HepG2 (cell line): ENCODE measurements at regions of chr4 and their contacts with region 1.

Region 1: DNA sequence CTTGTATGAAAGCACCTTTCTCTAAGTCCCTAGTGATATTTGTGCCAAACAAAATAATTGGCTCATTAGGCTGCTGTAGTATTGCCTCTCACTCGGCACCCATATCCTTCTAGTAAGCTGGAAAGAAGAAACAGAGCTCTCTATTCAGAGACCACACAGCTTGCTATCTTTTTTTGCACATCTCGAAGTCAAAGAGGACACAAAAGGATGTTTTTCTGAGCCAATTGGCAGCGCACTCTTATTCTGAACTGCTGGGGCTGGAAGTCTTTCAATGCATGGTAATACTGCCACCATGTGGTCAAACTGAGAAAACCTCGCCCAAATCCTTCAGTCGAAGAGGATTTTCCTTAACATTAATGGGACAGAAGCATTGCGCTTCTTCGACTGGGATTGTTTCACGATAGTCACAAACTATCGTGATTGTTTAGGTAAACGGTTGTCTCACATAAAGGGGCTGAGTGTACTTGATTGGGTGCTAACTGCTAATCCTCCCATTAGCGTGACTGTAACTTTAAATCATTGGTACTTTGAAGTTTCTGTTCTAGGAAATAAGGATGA is 572.0 kb upstream of the LCORL start:
- DNase-seq: peak; percentile 66
- ATAC-seq: peak; percentile 85
- H3K4me3 ChIP-seq: no peak overlapping the region
- H3K27ac ChIP-seq: no peak overlapping the region
- H3K4me1 ChIP-seq: peaks cover 11% of the 10 kb centered on the region; the same call in 1 of the 2 replicates
- H3K27me3 ChIP-seq: peaks cover 0 to 5% of the 10 kb centered on the region in 2 experiments; a peak in 1 of 5 replicates
- CTCF ChIP-seq: peak; percentile 85
- EP300 ChIP-seq: no peak
- POLR2A ChIP-seq: no peak
- RAD21 ChIP-seq: peak; percentile 83

Region 2: DNA sequence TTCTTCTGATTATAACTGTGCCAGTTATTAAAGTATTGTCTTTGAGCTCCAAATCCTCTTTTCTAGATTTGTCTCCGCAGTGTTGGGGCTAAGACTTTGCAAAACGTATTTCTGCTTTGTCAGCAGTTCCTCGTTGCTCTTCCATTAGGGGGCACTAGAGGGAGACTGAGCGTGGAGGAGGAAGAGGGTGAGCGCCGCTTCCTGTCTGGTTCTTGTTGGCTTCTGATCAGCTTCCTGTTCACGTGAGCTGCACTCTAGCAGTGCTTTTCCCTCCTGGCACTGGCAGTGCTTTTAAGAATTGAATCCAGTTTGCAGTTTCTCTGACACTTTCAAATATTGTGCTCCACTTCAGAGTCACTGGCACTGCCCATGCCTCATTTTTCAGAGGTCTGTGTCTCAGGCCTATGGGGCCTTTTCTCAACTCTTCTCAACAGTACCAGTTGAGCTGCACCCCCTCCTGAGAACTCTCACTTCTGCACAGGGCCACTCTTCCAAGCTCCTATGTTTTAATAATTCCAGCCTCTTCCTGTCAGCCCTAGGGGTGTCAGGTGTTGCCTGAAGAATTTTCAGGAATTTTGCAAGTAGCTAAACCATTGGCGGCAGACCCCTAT is 517.6 kb before region 1 on chr4:
- CTCF ChIA-PET with region 1: no interaction called
- POLR2A ChIA-PET with region 1: no interaction called
- in situ Hi-C with region 1: no loop called
- intact Hi-C with region 1: loop called (anchors 1 kb)
- DNase-seq: peak; percentile 56
- ATAC-seq: peak; percentile 78
- H3K4me3 ChIP-seq: no peak overlapping the region; a peak in 1 of 6 replicates
- H3K27ac ChIP-seq: no peak overlapping the region
- H3K4me1 ChIP-seq: no peaks in the 10 kb centered on the region
- H3K27me3 ChIP-seq: peaks cover 0 to 2% of the 10 kb centered on the region in 2 experiments; a peak in 2 of 5 replicates
- CTCF ChIP-seq: peak; percentile 59
- EP300 ChIP-seq: no peak
- POLR2A ChIP-seq: no peak
- RAD21 ChIP-seq: no peak

Region 3: GRCh38 chr4:18536428-18536827 is 57.1 kb before region 1 on chr4:
- CTCF ChIA-PET with region 1: interaction called, 15 read pairs
- POLR2A ChIA-PET with region 1: no interaction called
- in situ Hi-C with region 1: no loop called
- intact Hi-C with region 1: loop called (anchors 1 kb)
- DNase-seq: peak; percentile 31
- ATAC-seq: peak; percentile 89
- H3K4me3 ChIP-seq: no peak overlapping the region
- H3K27ac ChIP-seq: no peak overlapping the region
- H3K4me1 ChIP-seq: no peaks in the 10 kb centered on the region
- H3K27me3 ChIP-seq: no peaks in the 10 kb centered on the region
- CTCF ChIP-seq: peak; percentile 53
- EP300 ChIP-seq: no peak
- POLR2A ChIP-seq: no peak
- RAD21 ChIP-seq: no peak